ENCODE measurements at regions of chr12 and their contacts with region 1.

Region 1: GRCh38 chr12:98698603-98699463 is 53.7 kb downstream of the APAF1 start:
- DNase-seq: peak; percentile 54 to 81 (median 72)
- H3K4me3 ChIP-seq: no peak overlapping the region
- H3K27ac ChIP-seq: peak overlapping the region in 5 of 59 donors; percentile 3 to 42 (median 36)
- H3K27me3 ChIP-seq: no peaks in the 10 kb centered on the region
- CTCF ChIP-seq: peak in 55 of 56 donors; percentile 35 to 88 (median 75)

Region 2: DNA sequence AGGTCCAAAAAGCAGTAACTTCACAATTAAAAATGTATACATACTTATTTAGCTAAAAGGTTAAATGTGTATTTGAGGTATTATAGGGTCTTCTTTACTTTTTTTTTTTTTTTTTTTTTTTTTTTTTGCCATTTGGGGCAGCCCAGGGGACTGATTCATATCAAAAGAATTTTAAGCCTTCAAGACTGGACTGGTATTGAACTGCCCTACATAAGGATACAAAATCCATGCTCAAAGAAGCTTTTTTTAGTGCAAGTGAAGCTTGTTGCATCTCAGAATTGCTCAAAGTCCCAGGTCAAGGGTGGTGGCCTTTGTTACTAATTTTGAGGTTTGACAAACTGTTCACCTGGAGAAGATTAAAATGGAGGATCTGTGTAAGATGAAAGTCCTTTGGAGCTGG is 70.2 kb after region 1 on chr12:
- intact Hi-C with region 1: loop called in 1 of 2 experiments (anchors 2 kb)
- DNase-seq: no peak
- H3K4me3 ChIP-seq: no peak overlapping the region
- H3K27ac ChIP-seq: peak overlapping the region in 29 of 59 donors; percentile 3 to 67 (median 48)
- H3K27me3 ChIP-seq: no peaks in the 10 kb centered on the region
- CTCF ChIP-seq: no peak

Measured in dorsolateral prefrontal cortex (tissue), 120 donors.